H1 (cell line): ENCODE measurements at regions of chr7 and their contacts with region 1.

Region 1: GRCh38 chr7:105849122-105849855 is 27.1 kb downstream of the ATXN7L1 start:
- DNase-seq: peak in 1 of 2 experiments; percentile 80
- H3K4me3 ChIP-seq: 0 out of 8 replicates have a peak overlapping the region, but pooled peaks of 1 of the 4 experiments have one; percentile 12
- H3K27ac ChIP-seq: no peak overlapping the region
- H3K4me1 ChIP-seq: peaks cover 15 to 28% (median 19%) of the 10 kb centered on the region in 4 experiments
- H3K27me3 ChIP-seq: no peaks in the 10 kb centered on the region
- CTCF ChIP-seq: no peak
- EP300 ChIP-seq: peak in 1 of 2 experiments; percentile 67; a peak in 1 of 3 replicates
- POLR2A ChIP-seq: 0 out of 3 replicates have a peak, but pooled peaks of 1 of the 2 experiments have one; percentile 38
- RAD21 ChIP-seq: peak; percentile 3 to 8; a peak in 2 of 4 replicates

Region 2: DNA sequence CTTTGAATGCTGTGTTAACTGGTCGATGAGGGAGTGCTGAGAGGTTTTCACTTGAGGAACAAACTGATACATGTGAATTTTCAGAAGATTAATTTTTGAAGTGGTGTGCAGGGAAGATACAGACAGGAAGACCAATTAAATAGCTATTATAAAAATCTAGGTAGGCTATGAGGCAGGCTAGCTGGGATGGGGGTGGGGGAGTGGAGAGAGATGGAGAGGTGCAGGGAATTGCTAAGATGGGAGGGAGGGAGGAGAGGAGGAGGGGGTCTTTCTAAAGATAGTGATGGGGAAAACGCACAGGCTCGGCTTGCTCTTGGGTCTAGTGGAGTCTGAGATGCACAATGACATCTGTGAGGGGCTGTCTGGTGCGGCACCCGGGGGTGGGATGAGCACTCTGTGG is 11.9 kb after region 1 on chr7:
- CTCF ChIA-PET with region 1: interaction called, 12 read pairs
- POLR2A ChIA-PET with region 1: interaction called, 7 read pairs
- DNase-seq: no peak
- H3K4me3 ChIP-seq: peak overlapping the region in 1 of 4 experiments; percentile 9; a peak in 2 of 8 replicates
- H3K27ac ChIP-seq: no peak overlapping the region
- H3K4me1 ChIP-seq: peaks cover 6 to 17% (median 10%) of the 10 kb centered on the region in 4 experiments; a peak in 5 of 7 replicates
- H3K27me3 ChIP-seq: no peaks in the 10 kb centered on the region
- CTCF ChIP-seq: no peak
- EP300 ChIP-seq: no peak
- POLR2A ChIP-seq: no peak
- RAD21 ChIP-seq: no peak